ENCODE measurements at regions of chr2 and their contacts with region 1.

Region 1: GRCh38 chr2:70248181-70248847 is at the start of gene TIA1:
- DNase-seq: peak; percentile 95 to 99 (median 98)
- H3K4me3 ChIP-seq: peak within 1 kb of the TSS; percentile 39 to 89
- H3K4me3 Mint-ChIP-seq: peak within 1 kb of the TSS; percentile 90 to 99 (median 96)
- H3K27ac ChIP-seq: peak within 1 kb of the TSS; percentile 95
- H3K27ac Mint-ChIP-seq: peak within 1 kb of the TSS; percentile 93 to 99 (median 99)
- H3K4me1 ChIP-seq: peaks cover 39% of the 10 kb centered on the region
- H3K4me1 Mint-ChIP-seq: peaks cover 26 to 54% (median 33%) of the 10 kb centered on the region in 4 donors
- H3K27me3 ChIP-seq: no peaks in the 10 kb centered on the region
- H3K27me3 Mint-ChIP-seq: peaks cover 2 to 4% of the 10 kb centered on the region in 2 donors
- total RNA-seq, gene TIA1: 200 to 208 TPM

Region 2: GRCh38 chr2:69893684-69894551 is 354.4 kb before region 1 on chr2 and contains the start of gene SNRNP27:
- CTCF ChIA-PET with region 1: no interaction called
- POLR2A ChIA-PET with region 1: no interaction called
- intact Hi-C with region 1: loop called (anchors 5 kb)
- DNase-seq: peak; percentile 77 to 81 (median 80)
- H3K4me3 ChIP-seq: peak within 1 kb of the TSS; percentile 94 to 98
- H3K4me3 Mint-ChIP-seq: peak within 1 kb of the TSS; percentile 92 to 100 (median 100)
- H3K27ac ChIP-seq: peak within 1 kb of the TSS; percentile 89
- H3K27ac Mint-ChIP-seq: peak within 1 kb of the TSS; percentile 95 to 99 (median 98)
- H3K4me1 ChIP-seq: peaks cover 28% of the 10 kb centered on the region
- H3K4me1 Mint-ChIP-seq: peaks cover 22 to 53% (median 36%) of the 10 kb centered on the region in 4 donors
- H3K27me3 ChIP-seq: no peaks in the 10 kb centered on the region
- H3K27me3 Mint-ChIP-seq: no peaks in the 10 kb centered on the region
- total RNA-seq, gene SNRNP27: 44.6 to 48.5 TPM

Region 3: DNA sequence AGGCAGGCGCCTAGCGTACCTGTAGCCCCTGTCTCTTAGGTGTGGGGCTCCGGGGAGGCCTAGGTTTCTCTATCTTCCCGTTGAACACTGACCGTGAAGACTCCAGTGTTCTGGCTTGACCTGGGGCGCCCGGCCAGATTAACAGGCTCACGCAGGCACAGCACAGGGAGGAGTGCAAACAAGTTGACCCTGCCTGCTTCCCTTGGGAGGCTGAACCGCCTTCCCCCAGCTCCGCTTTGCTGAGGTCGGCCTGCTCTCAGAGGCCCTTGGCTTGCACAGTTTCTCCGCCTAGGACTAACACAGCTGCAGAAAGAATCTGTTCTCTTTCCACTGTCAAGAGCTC is 10.2 kb after region 1 on chr2:
- CTCF ChIA-PET with region 1: interaction called, 8 read pairs
- POLR2A ChIA-PET with region 1: interaction called, 37 read pairs
- intact Hi-C with region 1: loop called (anchors 1 kb)
- DNase-seq: peak in 1 of 5 donors; percentile 39
- H3K4me3 ChIP-seq: peak overlapping the region; percentile 10 to 79
- H3K4me3 Mint-ChIP-seq: peak overlapping the region; percentile 87 to 97 (median 93)
- H3K27ac ChIP-seq: peak overlapping the region; percentile 57
- H3K27ac Mint-ChIP-seq: peak overlapping the region; percentile 8 to 86 (median 69)
- H3K4me1 ChIP-seq: peaks cover 17% of the 10 kb centered on the region
- H3K4me1 Mint-ChIP-seq: peaks cover 26 to 48% (median 36%) of the 10 kb centered on the region in 4 donors
- H3K27me3 ChIP-seq: no peaks in the 10 kb centered on the region
- H3K27me3 Mint-ChIP-seq: no peaks in the 10 kb centered on the region

Region 4: DNA sequence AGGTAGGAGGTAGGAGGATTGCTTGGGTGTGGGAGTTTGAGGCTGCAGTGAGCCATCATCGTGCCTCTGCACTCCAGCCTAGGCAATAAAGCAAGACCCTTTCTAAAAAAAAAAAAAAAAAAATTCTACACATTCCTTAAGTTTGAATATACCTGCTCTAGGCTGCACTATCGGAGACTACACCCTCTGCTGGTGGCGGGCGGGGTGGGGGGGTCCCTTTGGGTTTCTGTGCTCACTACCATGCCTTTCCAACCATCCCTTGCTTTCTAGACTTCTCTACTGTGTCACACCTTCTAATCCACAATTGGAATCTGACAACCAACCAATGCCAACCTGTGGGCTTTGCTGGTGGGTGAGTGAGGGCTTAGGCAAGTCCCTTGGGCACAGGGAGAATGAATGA is 88.2 kb after region 1 on chr2:
- CTCF ChIA-PET with region 1: no interaction called
- POLR2A ChIA-PET with region 1: no interaction called
- intact Hi-C with region 1: no loop called
- DNase-seq: no peak
- H3K4me3 ChIP-seq: no peak overlapping the region
- H3K4me3 Mint-ChIP-seq: no peak overlapping the region
- H3K27ac ChIP-seq: no peak overlapping the region
- H3K27ac Mint-ChIP-seq: no peak overlapping the region
- H3K4me1 ChIP-seq: no peaks in the 10 kb centered on the region
- H3K4me1 Mint-ChIP-seq: peaks cover 0 to 2% (median under 1%) of the 10 kb centered on the region in 4 donors
- H3K27me3 ChIP-seq: no peaks in the 10 kb centered on the region
- H3K27me3 Mint-ChIP-seq: peaks cover 1 to 8% of the 10 kb centered on the region in 2 donors